Left cardiac atrium (tissue), 4 donors: ENCODE measurements at regions of chr2 and their contacts with region 1.

Region 1: GRCh38 chr2:237474931-237475703 is 11.9 kb upstream of the MLPH start:
- DNase-seq: peak; percentile 89
- ATAC-seq: peak; percentile 91 to 92

Region 2: GRCh38 chr2:237092920-237093781 is 382.0 kb before region 1 on chr2:
- intact Hi-C with region 1: loop called in 1 of 2 experiments (anchors 5 kb)
- DNase-seq: peak; percentile 42
- ATAC-seq: peak; percentile 53 to 74

Region 3: GRCh38 chr2:237122214-237122666 is 352.9 kb before region 1 on chr2:
- intact Hi-C with region 1: loop called in 1 of 2 experiments (anchors 10 kb)
- DNase-seq: peak; percentile 74
- ATAC-seq: peak; percentile 81 to 83

Region 4: DNA sequence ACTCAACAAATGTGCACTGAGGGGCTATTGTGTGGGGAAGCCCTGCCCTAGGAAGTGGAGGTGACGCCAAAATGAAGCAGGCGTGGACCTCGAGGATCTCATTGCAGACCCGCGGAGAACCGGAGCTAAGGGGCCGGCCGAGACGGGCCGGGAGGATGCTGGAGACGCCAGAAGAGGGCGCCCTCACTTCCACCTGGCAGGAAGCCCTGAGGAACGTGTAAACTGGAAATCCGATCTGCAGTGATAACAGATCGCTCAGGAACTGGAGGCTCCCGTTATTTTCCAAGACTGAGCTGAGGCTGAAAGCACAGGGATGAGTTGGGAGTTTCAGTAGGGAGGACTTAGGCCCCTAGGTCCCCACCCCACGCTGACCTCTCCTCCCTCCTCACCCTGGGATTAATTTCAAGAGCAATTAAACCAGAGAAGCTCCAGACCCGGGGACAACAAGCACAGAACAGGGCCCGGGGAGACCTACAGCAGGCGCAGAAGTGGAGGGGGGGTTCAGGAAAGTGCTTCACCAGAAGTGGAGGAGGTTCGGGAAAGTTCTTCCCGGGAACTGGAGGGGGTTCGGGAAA is 53.5 kb before region 1 on chr2:
- intact Hi-C with region 1: loop called (anchors 5 kb)
- DNase-seq: peak; percentile 83
- ATAC-seq: peak; percentile 90 to 92

Region 5: GRCh38 chr2:237427769-237428506 is 47.2 kb before region 1 on chr2:
- intact Hi-C with region 1: loop called (anchors 5 kb)
- DNase-seq: no peak
- ATAC-seq: no peak

Region 6: DNA sequence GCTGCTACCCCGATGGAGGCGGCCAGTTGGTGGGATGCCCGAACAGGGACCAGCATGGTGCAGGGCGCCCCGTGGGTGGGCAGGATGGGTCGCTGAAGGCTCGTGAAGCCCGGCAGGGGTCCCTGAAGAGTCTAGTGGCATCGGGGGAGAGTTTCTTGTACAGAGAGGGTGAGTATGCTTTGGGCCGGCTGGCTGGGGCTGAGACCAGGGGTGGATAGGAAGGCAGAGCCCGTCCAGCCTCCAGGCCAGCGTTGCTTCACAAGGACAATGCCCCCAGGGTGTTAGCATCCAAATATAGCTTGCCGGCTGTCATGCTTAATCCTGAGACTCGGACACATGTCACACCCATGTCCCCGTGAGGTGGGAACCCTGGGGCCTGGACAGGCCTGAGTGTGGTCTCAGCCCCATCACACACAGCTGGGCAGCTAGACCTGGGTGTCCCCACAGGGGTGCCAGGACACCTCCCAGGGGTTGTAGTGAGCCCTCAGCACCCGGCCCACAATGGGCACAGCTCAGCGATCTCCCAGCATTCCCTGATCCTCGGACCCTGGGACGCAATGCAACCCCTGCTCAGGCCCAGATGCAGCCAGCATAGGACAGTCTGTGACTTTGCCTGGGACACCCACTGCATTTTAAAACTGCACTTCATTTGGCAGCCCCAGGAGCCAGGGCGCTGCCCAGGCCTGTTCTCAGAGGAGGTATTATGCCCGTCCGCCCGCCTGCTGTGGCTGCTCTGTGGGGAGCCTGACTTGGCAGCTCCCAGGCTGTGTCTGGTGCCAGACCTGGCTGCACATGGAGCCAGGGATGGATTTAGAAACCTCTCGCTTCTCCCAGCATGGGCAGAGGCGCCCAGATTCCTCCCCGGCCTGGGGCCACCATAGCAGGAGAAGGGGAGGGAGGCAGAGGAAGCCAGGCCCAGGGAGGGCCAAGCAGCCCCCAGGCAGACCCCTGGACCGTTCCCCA is 420.7 kb after region 1 on chr2:
- intact Hi-C with region 1: no loop called
- DNase-seq: peak; percentile 71
- ATAC-seq: peak; percentile 87